Activated naive CD4-positive, alpha-beta T cell treated with anti-CD3 and anti-CD28 coated beads for 36 hours (primary cell): ENCODE measurements at regions of chr3 and their contacts with region 1.

Region 1: GRCh38 chr3:149702691-149703441 is 45.0 kb upstream of the WWTR1 start:
- DNase-seq: no peak
- H3K4me3 Mint-ChIP-seq: no peak overlapping the region
- H3K27ac Mint-ChIP-seq: no peak overlapping the region
- H3K4me1 Mint-ChIP-seq: peaks cover 3% of the 10 kb centered on the region
- H3K27me3 Mint-ChIP-seq: no peaks in the 10 kb centered on the region

Region 2: GRCh38 chr3:149366941-149367840 is 335.7 kb before region 1 on chr3:
- CTCF ChIA-PET with region 1: no interaction called
- intact Hi-C with region 1: loop called (anchors 2 kb)
- DNase-seq: peak; percentile 43
- H3K4me3 Mint-ChIP-seq: no peak overlapping the region
- H3K27ac Mint-ChIP-seq: no peak overlapping the region
- H3K4me1 Mint-ChIP-seq: peaks cover 8% of the 10 kb centered on the region
- H3K27me3 Mint-ChIP-seq: peaks cover 17% of the 10 kb centered on the region

Region 3: DNA sequence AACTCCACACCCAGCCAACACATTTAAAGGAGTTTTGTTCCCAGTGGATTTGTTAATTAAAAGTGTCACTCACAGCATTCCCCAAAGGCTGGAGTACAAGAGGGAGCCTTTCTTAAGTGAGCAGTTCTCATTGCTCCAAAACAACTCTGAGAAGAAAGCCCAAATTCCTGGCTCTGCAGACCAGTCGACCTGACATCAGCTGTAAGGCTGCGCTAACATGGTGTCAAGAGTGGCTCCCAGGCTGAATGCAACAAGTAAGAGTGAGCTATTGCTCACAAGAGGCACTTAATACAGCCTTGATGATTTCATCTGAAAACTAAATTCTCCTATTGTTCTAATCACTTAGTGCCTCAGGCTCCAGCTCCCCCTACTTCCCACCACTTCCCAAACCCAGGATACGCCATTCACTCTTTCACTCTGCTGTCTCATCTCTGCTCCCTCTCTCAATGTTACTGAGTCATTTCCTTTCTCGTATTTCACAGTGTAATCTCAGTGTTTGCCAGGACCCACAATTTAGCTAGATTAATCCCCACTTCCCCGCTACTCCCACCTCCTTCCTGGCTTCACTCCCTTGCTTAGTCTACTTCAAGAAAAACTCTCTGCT is 126.8 kb before region 1 on chr3:
- CTCF ChIA-PET with region 1: no interaction called
- intact Hi-C with region 1: loop called (anchors 1 kb)
- DNase-seq: peak; percentile 7
- H3K4me3 Mint-ChIP-seq: no peak overlapping the region
- H3K27ac Mint-ChIP-seq: no peak overlapping the region
- H3K4me1 Mint-ChIP-seq: peaks cover 18% of the 10 kb centered on the region
- H3K27me3 Mint-ChIP-seq: peaks cover 16% of the 10 kb centered on the region

Region 4: GRCh38 chr3:149657926-149658733 is 44.7 kb before region 1 on chr3 and contains the start of gene WWTR1:
- CTCF ChIA-PET with region 1: no interaction called
- intact Hi-C with region 1: loop called (anchors 2 kb)
- DNase-seq: peak; percentile 59
- H3K4me3 Mint-ChIP-seq: peak within 1 kb of the TSS; percentile 81
- H3K27ac Mint-ChIP-seq: no peak within 1 kb of the TSS
- H3K4me1 Mint-ChIP-seq: peaks cover 11% of the 10 kb centered on the region
- H3K27me3 Mint-ChIP-seq: peaks cover 67% of the 10 kb centered on the region
- total RNA-seq, gene WWTR1: 0.19 to 0.42 TPM

Region 5: GRCh38 chr3:149726716-149727407 is 24.0 kb after region 1 on chr3:
- CTCF ChIA-PET with region 1: no interaction called
- intact Hi-C with region 1: no loop called
- DNase-seq: no peak
- H3K4me3 Mint-ChIP-seq: no peak overlapping the region
- H3K27ac Mint-ChIP-seq: no peak overlapping the region
- H3K4me1 Mint-ChIP-seq: no peaks in the 10 kb centered on the region
- H3K27me3 Mint-ChIP-seq: no peaks in the 10 kb centered on the region